ENCODE measurements at regions of chr15 and their contacts with region 1.

Region 1: GRCh38 chr15:94576889-94577533 is 345.6 kb downstream of the MCTP2 start:
- DNase-seq: peak; percentile 70

Region 2: GRCh38 chr15:95446854-95447253 is 869.8 kb after region 1 on chr15:
- in situ Hi-C with region 1: loop called (anchors 25 kb)
- DNase-seq: peak; percentile 82